Endothelial cell of umbilical vein (primary cell): ENCODE measurements at regions of chr17 and their contacts with region 1.

Region 1: GRCh38 chr17:39527220-39527813 is 66.0 kb downstream of the CDK12 start:
- DNase-seq: peak; percentile 56
- H3K4me3 ChIP-seq: no peak overlapping the region
- H3K27ac ChIP-seq: no peak overlapping the region
- H3K4me1 ChIP-seq: peaks cover 9% of the 10 kb centered on the region
- H3K27me3 ChIP-seq: no peaks in the 10 kb centered on the region
- CTCF ChIP-seq: peak; percentile 36 to 49
- POLR2A ChIP-seq: no peak

Region 2: GRCh38 chr17:39538866-39539265 is 11.5 kb after region 1 on chr17:
- CTCF ChIA-PET with region 1: interaction called, 11 read pairs
- POLR2A ChIA-PET with region 1: no interaction called
- dilution Hi-C with region 1: no loop called
- intact Hi-C with region 1: no loop called
- DNase-seq: no peak
- H3K4me3 ChIP-seq: no peak overlapping the region
- H3K27ac ChIP-seq: no peak overlapping the region
- H3K4me1 ChIP-seq: peaks cover 10% of the 10 kb centered on the region
- H3K27me3 ChIP-seq: no peaks in the 10 kb centered on the region
- CTCF ChIP-seq: no peak
- POLR2A ChIP-seq: no peak

Region 3: GRCh38 chr17:39668199-39668966 is 141.1 kb after region 1 on chr17 and contains the start of gene PNMT:
- CTCF ChIA-PET with region 1: no interaction called
- POLR2A ChIA-PET with region 1: no interaction called
- dilution Hi-C with region 1: no loop called
- intact Hi-C with region 1: no loop called
- DNase-seq: peak; percentile 48
- H3K4me3 ChIP-seq: peak within 1 kb of the TSS in 1 of 3 experiments; percentile 3
- H3K27ac ChIP-seq: no peak within 1 kb of the TSS
- H3K4me1 ChIP-seq: no peaks in the 10 kb centered on the region
- H3K27me3 ChIP-seq: peaks cover 6 to 10% of the 10 kb centered on the region in 2 experiments
- CTCF ChIP-seq: peak; percentile 77 to 84
- POLR2A ChIP-seq: no peak
- total RNA-seq, gene PNMT: not detected in 2 replicates